ENCODE measurements at regions of chr17 and their contacts with region 1.

Region 1: GRCh38 chr17:79839363-79840268 is at the start of gene CBX4:
- DNase-seq: peak; percentile 96 to 98 (median 97)
- ATAC-seq: peak; percentile 79 to 84 (median 82)
- H3K4me3 ChIP-seq: peak within 1 kb of the TSS; percentile 53 to 99 (median 82)
- H3K27ac ChIP-seq: peak within 1 kb of the TSS; percentile 71 to 97 (median 94)
- H3K4me1 ChIP-seq: peaks cover 0 to 81% (median 64%) of the 10 kb centered on the region in 12 donors
- H3K27me3 ChIP-seq: peaks cover 27 to 48% (median 38%) of the 10 kb centered on the region in 9 donors
- CTCF ChIP-seq: peak; percentile 37 to 79 (median 66)
- POLR2A ChIP-seq: peak in 1 of 2 donors; percentile 85
- total RNA-seq, gene CBX4: 16.7 to 41.1 (median 26.9) TPM

Region 2: DNA sequence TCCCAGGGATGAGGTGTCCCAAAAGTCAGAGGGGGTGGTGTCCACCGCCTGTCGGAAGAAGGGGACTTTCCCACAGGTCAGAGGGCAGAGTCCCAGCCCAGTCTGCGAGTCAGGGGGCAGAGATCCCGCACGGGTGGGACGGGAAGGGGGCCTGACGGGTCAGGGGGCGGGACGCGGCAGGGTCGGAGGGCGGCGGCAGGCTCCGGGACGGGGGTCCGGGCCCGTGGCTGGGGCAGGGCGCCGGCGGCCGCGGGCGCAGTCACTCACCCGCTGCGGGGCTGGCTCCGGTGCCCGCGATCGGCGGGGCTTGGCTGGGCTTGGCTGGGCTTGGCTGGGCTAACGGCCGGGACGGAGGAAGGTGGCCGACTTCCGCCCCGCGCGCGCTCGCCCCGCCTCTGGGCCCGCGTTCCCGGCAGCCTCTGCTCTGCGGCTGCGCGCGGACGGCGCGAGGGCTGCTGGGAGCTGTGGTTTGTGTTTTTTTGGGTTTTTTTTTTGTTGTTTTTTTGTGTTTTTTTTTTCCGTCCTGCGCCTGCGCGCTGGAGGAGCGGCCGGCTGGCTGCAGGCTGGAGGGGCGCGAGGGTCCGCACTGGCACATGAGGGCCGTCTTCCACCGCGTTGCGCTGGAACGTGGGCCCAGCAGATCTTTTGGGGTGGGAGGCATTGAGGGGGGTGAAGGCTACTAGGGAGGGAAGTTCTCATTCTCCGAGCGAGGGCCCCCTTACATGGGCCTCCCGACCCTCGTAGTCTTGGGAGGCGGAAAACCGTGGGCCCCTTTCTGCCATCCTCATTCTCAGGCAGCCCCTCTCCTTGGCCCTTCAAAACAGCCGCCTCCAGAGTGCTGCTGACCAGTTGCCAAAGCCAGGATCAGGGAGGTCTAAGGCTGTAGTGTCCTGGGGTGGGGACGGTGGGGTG is 830.0 kb before region 1 on chr17 and contains the start of gene CANT1:
- intact Hi-C with region 1: no loop called
- DNase-seq: peak; percentile 86 to 93 (median 88)
- ATAC-seq: peak; percentile 81 to 97 (median 96)
- H3K4me3 ChIP-seq: peak within 1 kb of the TSS; percentile 57 to 100 (median 83)
- H3K27ac ChIP-seq: peak within 1 kb of the TSS; percentile 68 to 94 (median 88)
- H3K4me1 ChIP-seq: peaks cover 7 to 48% (median 33%) of the 10 kb centered on the region in 12 donors
- H3K27me3 ChIP-seq: no peaks in the 10 kb centered on the region
- CTCF ChIP-seq: no peak
- POLR2A ChIP-seq: peak in 1 of 2 donors; percentile 60
- total RNA-seq, gene CANT1: 20.4 to 43.7 (median 24.1) TPM

Region 3: DNA sequence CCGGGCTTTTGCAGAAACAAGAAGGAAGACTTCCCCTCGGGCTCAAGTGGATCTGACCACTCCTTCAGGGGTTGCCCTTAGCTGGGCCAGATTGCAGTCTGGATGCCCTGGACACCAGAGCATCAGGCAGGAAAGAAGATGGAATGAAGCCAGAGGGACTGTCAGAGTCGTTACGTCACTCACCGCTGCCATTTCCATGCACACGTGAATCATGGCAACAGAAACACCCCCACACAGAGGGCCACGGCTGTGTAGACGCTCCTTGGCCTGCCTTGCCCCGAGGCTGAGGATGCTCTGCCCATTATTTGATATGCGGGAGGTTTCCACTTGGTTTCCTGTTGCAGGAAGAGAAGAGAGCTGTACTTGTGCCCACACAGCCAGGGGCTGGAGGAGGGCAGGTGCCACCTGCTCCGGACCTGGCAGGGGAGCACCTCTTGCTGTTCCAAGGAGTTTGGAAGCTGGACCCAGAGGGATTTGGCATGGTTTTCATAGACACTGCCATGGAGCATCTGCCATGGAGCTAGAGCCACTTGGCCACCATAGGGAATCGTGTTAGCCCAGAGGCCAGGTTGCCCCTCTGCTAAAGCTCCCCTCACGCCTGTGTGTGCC is 258.2 kb before region 1 on chr17:
- intact Hi-C with region 1: no loop called
- DNase-seq: no peak
- ATAC-seq: no peak
- H3K4me3 ChIP-seq: no peak overlapping the region
- H3K27ac ChIP-seq: no peak overlapping the region
- H3K4me1 ChIP-seq: no peaks in the 10 kb centered on the region
- H3K27me3 ChIP-seq: peaks cover 0 to 5% (median 0%) of the 10 kb centered on the region in 9 donors
- CTCF ChIP-seq: no peak
- POLR2A ChIP-seq: no peak

Region 4: DNA sequence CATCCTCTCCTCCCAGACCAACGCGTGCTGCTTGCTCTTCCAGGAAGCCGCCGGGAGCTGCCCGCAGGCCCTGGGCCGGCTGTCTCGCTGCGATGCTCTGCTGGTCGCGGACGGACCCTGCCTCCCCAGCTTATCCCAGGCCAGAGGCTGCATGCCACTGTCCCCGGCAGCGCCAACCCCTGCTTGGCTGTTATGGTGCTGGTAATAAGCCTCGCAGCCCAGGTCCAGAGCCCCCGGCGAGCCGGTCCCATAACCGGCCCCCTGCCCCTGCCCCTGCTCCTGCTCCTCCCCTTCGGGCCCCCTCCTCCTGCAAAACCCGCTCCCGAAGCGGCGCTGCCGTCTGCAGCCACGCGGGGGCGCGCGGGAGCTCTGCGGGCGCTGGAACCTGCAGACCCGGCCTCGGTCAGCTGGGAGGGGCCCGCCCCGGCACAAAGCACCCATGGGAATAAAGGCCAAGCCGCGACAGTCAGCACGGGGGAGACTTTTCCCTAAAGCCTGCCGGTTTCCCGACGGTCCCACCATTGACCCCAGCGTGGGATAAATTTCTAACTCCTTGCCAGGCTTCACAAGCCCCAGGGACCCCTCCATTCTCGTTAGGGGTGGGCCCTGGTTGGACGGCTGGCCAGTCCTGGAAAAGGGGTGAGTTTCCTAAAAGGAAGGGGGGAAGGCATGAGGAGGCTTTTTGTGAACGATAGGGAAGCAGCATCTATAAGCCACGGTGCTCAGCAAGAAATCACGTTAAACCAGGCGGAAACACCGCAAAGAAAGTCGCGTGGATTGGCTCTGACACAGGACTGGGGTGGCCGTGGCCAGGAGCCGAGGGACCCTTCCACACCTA is 97.6 kb before region 1 on chr17:
- intact Hi-C with region 1: loop called in 3 of 10 experiments (anchors 5 to 10 kb)
- DNase-seq: peak; percentile 62 to 88 (median 69)
- ATAC-seq: peak in 3 of 4 donors; percentile 65 to 77 (median 70)
- H3K4me3 ChIP-seq: peak overlapping the region in 4 of 12 donors; percentile 21 to 32 (median 24)
- H3K27ac ChIP-seq: no peak overlapping the region
- H3K4me1 ChIP-seq: peaks cover 0 to 18% (median 7%) of the 10 kb centered on the region in 12 donors
- H3K27me3 ChIP-seq: peaks cover 16 to 71% (median 52%) of the 10 kb centered on the region in 9 donors
- CTCF ChIP-seq: peak; percentile 85 to 97 (median 93)
- POLR2A ChIP-seq: no peak

Region 5: DNA sequence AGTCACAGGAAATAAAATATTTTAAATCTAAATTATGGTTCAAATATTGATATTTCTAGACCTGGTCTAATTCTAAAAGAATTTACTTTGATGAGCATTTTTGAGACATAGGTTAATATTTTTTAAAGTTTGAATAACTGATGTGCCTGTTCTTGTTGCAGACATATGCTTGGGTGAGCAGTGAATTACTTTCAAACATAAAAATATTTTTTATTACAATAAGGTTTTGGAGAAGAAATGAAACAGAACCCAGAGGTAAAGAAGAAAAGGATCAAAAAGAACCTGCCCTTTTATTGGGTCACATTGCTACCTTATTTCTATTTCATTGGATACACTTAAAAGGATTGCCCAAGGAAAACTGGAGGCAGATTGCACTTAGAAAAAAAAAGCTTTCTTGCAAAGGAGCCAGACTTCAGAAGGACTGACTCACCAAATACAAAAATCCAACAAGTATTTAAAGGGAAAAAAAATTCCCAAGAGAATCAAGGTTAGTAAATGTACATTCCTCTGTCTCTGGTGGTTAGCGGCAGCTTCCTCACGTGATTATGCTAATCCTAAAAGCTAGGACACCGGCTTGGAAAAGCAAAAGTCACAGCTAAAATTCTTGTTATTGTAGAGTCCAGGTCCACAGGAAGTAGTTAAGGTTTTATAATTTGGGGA is 90.3 kb before region 1 on chr17:
- intact Hi-C with region 1: loop called in 3 of 10 experiments (anchors 5 to 10 kb)
- DNase-seq: no peak
- ATAC-seq: no peak
- H3K4me3 ChIP-seq: no peak overlapping the region
- H3K27ac ChIP-seq: no peak overlapping the region
- H3K4me1 ChIP-seq: peaks cover 0 to 21% (median 5%) of the 10 kb centered on the region in 12 donors
- H3K27me3 ChIP-seq: peaks cover 27 to 88% (median 72%) of the 10 kb centered on the region in 9 donors
- CTCF ChIP-seq: no peak
- POLR2A ChIP-seq: no peak

Region 6: DNA sequence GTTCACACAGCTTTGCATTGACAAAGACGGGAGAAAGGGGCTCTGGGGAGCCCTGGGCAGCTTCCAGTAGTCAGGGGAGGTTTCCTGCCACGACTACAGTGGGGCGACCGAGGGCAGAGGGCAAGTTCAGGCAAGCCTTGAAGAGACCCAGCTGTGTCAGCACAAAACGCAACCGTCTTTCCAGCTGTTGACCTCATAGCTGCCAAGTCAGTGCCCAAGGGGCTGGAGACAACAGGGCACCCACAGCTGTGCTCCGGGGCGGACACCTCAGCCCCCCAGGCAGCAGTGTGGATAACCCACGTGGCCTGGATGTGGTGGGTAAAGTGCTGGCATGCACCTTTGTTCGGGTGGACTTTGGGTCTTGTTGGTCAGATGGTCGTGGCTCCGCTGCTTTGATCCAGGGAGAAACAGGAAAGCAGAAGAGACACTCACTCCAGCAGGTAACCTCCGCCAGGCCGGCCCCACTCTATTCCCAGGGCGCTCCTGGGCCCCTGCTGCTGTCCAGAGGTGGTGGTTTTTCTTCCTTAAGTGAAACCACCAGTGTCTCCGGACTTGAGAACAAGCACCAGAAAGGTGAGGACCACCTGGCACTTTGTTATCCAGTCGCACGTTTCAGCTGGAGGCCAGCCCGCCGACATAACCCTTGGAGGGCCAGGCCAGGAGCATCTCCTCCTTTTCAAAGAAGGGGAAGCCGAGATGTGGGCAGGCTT is 79.3 kb before region 1 on chr17:
- intact Hi-C with region 1: no loop called
- DNase-seq: peak in 1 of 5 donors; percentile 28
- ATAC-seq: no peak
- H3K4me3 ChIP-seq: no peak overlapping the region
- H3K27ac ChIP-seq: no peak overlapping the region
- H3K4me1 ChIP-seq: no peaks in the 10 kb centered on the region
- H3K27me3 ChIP-seq: peaks cover 0 to 9% (median 0%) of the 10 kb centered on the region in 9 donors
- CTCF ChIP-seq: no peak
- POLR2A ChIP-seq: no peak

Region 7: GRCh38 chr17:79777894-79778503 is 61.6 kb before region 1 on chr17 and contains the start of gene CBX2:
- intact Hi-C with region 1: no loop called
- DNase-seq: peak; percentile 81 to 92 (median 85)
- ATAC-seq: peak in 3 of 4 donors; percentile 70 to 81 (median 80)
- H3K4me3 ChIP-seq: peak within 1 kb of the TSS; percentile 53 to 96 (median 76)
- H3K27ac ChIP-seq: peak within 1 kb of the TSS; percentile 55 to 84 (median 77)
- H3K4me1 ChIP-seq: peaks cover 0 to 38% (median 17%) of the 10 kb centered on the region in 12 donors
- H3K27me3 ChIP-seq: peaks cover 0 to 65% (median 5%) of the 10 kb centered on the region in 9 donors
- CTCF ChIP-seq: peak in 1 of 12 donors; percentile 4
- POLR2A ChIP-seq: peak in 1 of 2 donors; percentile 27
- total RNA-seq, gene CBX2: 2.4 to 4.3 (median 3.2) TPM

Region 8: GRCh38 chr17:79796763-79797491 is 42.7 kb before region 1 on chr17 and contains the start of gene CBX8:
- intact Hi-C with region 1: loop called in 8 of 10 experiments (anchors 2 to 5 kb)
- DNase-seq: peak; percentile 100
- ATAC-seq: peak; percentile 93 to 99 (median 97)
- H3K4me3 ChIP-seq: peak within 1 kb of the TSS; percentile 56 to 95 (median 74)
- H3K27ac ChIP-seq: peak within 1 kb of the TSS; percentile 49 to 92 (median 86)
- H3K4me1 ChIP-seq: peaks cover 3 to 67% (median 50%) of the 10 kb centered on the region in 12 donors
- H3K27me3 ChIP-seq: peaks cover 50 to 67% (median 61%) of the 10 kb centered on the region in 9 donors
- CTCF ChIP-seq: peak in 10 of 12 donors; percentile 8 to 51 (median 27)
- POLR2A ChIP-seq: peak in 1 of 2 donors; percentile 54
- total RNA-seq, gene CBX8: 1.5 to 9.2 (median 5.3) TPM

Region 9: DNA sequence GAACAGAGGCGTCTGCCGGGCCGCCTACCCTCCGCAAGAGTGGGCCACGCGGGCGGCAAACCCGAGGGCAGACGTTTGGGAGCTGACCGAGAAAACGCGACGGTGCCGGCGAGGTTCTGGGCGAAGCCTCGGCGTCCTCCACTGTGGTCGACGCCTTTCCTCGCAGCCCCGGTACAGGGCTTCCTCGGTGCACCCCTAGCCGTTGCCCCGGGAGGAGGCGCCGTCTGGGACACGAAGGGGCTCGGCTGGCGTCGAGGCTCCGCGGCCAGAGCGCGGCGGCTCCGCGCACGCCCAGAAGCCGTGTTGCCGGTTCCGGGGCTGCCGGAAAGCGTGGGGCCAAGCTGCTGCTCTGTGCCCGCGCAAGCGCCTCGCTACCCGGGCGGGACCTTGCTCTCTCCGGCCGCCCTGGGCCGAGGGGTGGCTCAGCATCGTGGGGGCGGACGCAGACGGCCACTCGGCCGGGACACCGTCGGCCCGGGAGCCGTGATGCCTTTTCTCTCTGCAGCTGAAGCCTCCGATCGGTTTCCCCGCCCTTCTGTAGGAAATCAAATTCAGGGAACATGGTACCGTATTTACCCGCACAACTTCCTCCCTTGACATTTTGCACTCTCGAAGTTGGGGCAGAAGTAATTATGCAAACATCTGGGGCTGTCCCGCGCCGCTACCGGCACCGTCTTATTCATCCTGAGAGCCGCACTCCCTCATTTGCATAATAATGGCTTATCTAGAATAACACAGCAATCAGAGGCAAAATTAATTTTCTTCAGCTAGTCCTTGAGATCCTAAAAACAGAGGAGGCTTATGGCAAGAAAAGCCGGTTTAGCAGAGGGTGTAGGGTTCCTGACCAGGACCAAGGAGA is 35.4 kb before region 1 on chr17:
- intact Hi-C with region 1: loop called in 7 of 10 experiments (anchors 2 to 5 kb)
- DNase-seq: no peak
- ATAC-seq: no peak
- H3K4me3 ChIP-seq: peak overlapping the region in 2 of 12 donors; percentile 25 to 44
- H3K27ac ChIP-seq: no peak overlapping the region
- H3K4me1 ChIP-seq: peaks cover 0 to 55% (median 21%) of the 10 kb centered on the region in 12 donors
- H3K27me3 ChIP-seq: peaks cover 85 to 100% (median 97%) of the 10 kb centered on the region in 9 donors
- CTCF ChIP-seq: no peak
- POLR2A ChIP-seq: no peak

Measured in heart left ventricle (tissue), 16 donors.